ENCODE measurements at regions of chr3 and their contacts with region 1.

Region 1: DNA sequence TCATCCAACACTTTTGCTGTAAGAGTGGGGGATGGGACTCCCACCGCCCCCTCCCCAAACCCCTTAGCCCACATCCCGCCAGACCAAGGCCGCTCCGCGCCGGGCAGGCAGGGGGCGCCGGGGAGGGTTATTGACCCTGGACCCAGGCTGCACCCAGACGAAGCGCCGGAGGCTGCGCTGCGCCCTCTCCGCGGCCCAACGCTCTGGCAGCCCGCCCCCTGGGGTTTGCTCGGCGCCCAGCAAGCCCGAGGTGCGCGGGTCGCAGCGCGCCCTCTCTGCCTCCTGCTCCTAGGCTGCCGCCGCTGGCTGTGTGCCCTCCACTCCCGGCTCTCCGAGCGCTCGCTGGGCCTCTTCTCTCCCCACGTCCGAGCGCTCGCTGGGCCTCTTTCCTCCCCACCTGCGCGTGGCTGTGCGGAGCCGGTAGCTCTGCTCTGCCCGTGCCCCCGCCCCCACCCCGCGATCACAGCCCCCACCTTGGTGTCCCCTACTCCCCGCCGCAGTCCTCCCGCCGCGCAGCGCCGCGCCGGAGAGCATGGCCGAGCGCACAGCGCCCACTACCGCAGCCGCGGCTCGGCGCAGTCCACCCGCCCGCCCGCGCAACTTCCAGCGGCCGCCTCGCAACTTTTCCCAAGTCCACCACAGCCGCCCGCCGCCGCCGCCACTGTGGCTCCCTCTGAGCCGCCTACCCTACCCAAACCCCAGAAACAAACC is 1.2 kb downstream of the MECOM start:
- DNase-seq: peak; percentile 57
- ATAC-seq: peak; percentile 86
- H3K4me3 ChIP-seq: peak overlapping the region; percentile 68
- H3K27ac ChIP-seq: peak overlapping the region; percentile 36
- H3K4me1 ChIP-seq: no peaks in the 10 kb centered on the region
- H3K27me3 ChIP-seq: peaks cover 35% of the 10 kb centered on the region
- CTCF ChIP-seq: peak; percentile 60
- POLR2A ChIP-seq: no peak
- RAD21 ChIP-seq: peak; percentile 61

Region 2: DNA sequence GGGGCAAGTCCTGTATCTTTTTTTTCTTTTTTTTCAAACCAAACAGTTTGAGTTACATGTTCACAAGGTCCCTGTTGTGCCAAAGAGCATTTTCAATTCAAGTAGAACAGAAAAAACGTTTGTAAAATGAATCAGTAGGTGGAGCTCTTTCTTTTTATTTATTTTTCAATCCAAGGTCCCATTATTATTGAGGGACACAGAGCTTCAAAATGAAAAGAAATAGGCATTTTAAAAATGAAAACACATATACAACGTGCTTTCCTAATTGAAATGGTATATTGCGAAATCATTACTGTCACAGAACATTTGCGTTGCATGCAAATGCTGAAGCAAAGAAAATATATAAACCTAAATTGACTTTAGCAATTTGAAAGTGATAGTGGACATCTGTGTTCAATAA is 709.7 kb before region 1 on chr3:
- CTCF ChIA-PET with region 1: no interaction called
- POLR2A ChIA-PET with region 1: no interaction called
- dilution Hi-C with region 1: no loop called
- in situ Hi-C with region 1: no loop called
- intact Hi-C with region 1: loop called (anchors 2 kb)
- DNase-seq: peak; percentile 47
- ATAC-seq: peak; percentile 76; the same call in 1 of the 2 replicates
- H3K4me3 ChIP-seq: no peak overlapping the region
- H3K27ac ChIP-seq: no peak overlapping the region
- H3K4me1 ChIP-seq: no peaks in the 10 kb centered on the region
- H3K27me3 ChIP-seq: no peaks in the 10 kb centered on the region
- CTCF ChIP-seq: peak; percentile 39
- POLR2A ChIP-seq: no peak
- RAD21 ChIP-seq: peak; percentile 18; the same call in 1 of the 2 replicates

Region 3: GRCh38 chr3:169041677-169042171 is 620.6 kb before region 1 on chr3:
- CTCF ChIA-PET with region 1: no interaction called
- POLR2A ChIA-PET with region 1: no interaction called
- dilution Hi-C with region 1: no loop called
- in situ Hi-C with region 1: loop called (anchors 25 kb)
- intact Hi-C with region 1: loop called (anchors 2 kb)
- DNase-seq: peak; percentile 80
- ATAC-seq: peak; percentile 68
- H3K4me3 ChIP-seq: no peak overlapping the region
- H3K27ac ChIP-seq: no peak overlapping the region
- H3K4me1 ChIP-seq: peaks cover 2% of the 10 kb centered on the region; the same call in 1 of the 2 replicates
- H3K27me3 ChIP-seq: no peaks in the 10 kb centered on the region
- CTCF ChIP-seq: peak; percentile 74
- POLR2A ChIP-seq: no peak
- RAD21 ChIP-seq: peak; percentile 63

Region 4: GRCh38 chr3:169133178-169134161 is 528.8 kb before region 1 on chr3:
- CTCF ChIA-PET with region 1: interaction called, 3 read pairs
- POLR2A ChIA-PET with region 1: no interaction called
- dilution Hi-C with region 1: no loop called
- in situ Hi-C with region 1: loop called (anchors 5 kb)
- intact Hi-C with region 1: no loop called
- DNase-seq: peak; percentile 31
- ATAC-seq: 0 out of 2 replicates have a peak, but pooled peaks have one; percentile 44
- H3K4me3 ChIP-seq: no peak overlapping the region
- H3K27ac ChIP-seq: no peak overlapping the region
- H3K4me1 ChIP-seq: no peaks in the 10 kb centered on the region
- H3K27me3 ChIP-seq: no peaks in the 10 kb centered on the region
- CTCF ChIP-seq: peak; percentile 63
- POLR2A ChIP-seq: no peak
- RAD21 ChIP-seq: peak; percentile 53

Measured in IMR-90 (cell line).